Aorta (tissue), 5 donors: ENCODE measurements at regions of chr18 and their contacts with region 1.

Region 1: DNA sequence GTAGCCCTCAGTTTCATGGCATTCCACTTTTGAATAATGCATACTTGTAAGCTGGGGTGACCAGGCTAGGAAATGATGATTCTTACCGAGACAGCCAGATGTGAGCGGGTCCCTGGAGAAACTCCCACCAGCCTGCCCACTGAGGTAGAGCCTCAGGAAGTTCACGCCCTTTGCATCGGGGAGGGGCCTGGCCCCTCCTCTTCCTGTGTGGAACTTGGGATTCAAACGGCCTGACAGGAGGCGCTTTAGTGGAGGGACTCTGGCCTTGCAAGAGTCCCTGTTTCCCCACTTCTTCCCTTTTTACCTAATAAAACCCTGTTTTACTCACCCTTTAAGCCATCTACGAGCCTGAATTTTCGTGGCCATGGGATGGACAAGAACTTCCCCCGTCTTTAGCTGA is 44.6 kb downstream of the MRO start:
- DNase-seq: no peak
- ATAC-seq: no peak
- H3K4me3 ChIP-seq: no peak overlapping the region
- H3K27ac ChIP-seq: no peak overlapping the region
- H3K4me1 ChIP-seq: no peaks in the 10 kb centered on the region
- H3K27me3 ChIP-seq: no peaks in the 10 kb centered on the region

Region 2: GRCh38 chr18:50836521-50836957 is 61.3 kb after region 1 on chr18:
- intact Hi-C with region 1: loop called in 1 of 2 experiments (anchors 10 kb)
- DNase-seq: no peak
- ATAC-seq: no peak
- H3K4me3 ChIP-seq: no peak overlapping the region
- H3K27ac ChIP-seq: no peak overlapping the region
- H3K4me1 ChIP-seq: no peaks in the 10 kb centered on the region
- H3K27me3 ChIP-seq: no peaks in the 10 kb centered on the region

Region 3: GRCh38 chr18:51009072-51009471 is 233.8 kb after region 1 on chr18:
- intact Hi-C with region 1: no loop called
- DNase-seq: no peak
- ATAC-seq: no peak
- H3K4me3 ChIP-seq: no peak overlapping the region
- H3K27ac ChIP-seq: no peak overlapping the region
- H3K4me1 ChIP-seq: no peaks in the 10 kb centered on the region
- H3K27me3 ChIP-seq: no peaks in the 10 kb centered on the region